PC-9 (cell line): ENCODE measurements at regions of chr16 and their contacts with region 1.

Region 1: GRCh38 chr16:4373863-4374742 is 2.5 kb downstream of the VASN start:
- DNase-seq: peak; percentile 59 to 85
- H3K4me3 ChIP-seq: peak overlapping the region; percentile 61; the same call in 1 of the 2 replicates
- H3K27ac ChIP-seq: peak overlapping the region; percentile 62
- H3K4me1 ChIP-seq: peaks cover 71% of the 10 kb centered on the region
- H3K27me3 ChIP-seq: no peaks in the 10 kb centered on the region
- CTCF ChIP-seq: no peak

Region 2: GRCh38 chr16:2682209-2683021 is 1691.7 kb before region 1 on chr16 and contains the start of gene KCTD5:
- CTCF ChIA-PET with region 1: no interaction called
- POLR2A ChIA-PET with region 1: no interaction called
- intact Hi-C with region 1: no loop called
- DNase-seq: peak; percentile 95 to 100
- H3K4me3 ChIP-seq: peak within 1 kb of the TSS; percentile 81
- H3K27ac ChIP-seq: peak within 1 kb of the TSS; percentile 72
- H3K4me1 ChIP-seq: peaks cover 33% of the 10 kb centered on the region
- H3K27me3 ChIP-seq: no peaks in the 10 kb centered on the region
- CTCF ChIP-seq: no peak
- total RNA-seq, gene KCTD5: 60.4 and 66.5 TPM in 2 replicates

Region 3: GRCh38 chr16:4271176-4272066 is 102.7 kb before region 1 on chr16:
- CTCF ChIA-PET with region 1: no interaction called
- POLR2A ChIA-PET with region 1: no interaction called
- intact Hi-C with region 1: loop called (anchors 5 kb)
- DNase-seq: peak; percentile 82 to 94
- H3K4me3 ChIP-seq: peak overlapping the region; percentile 81
- H3K27ac ChIP-seq: peak overlapping the region; percentile 92
- H3K4me1 ChIP-seq: peaks cover 7% of the 10 kb centered on the region
- H3K27me3 ChIP-seq: no peaks in the 10 kb centered on the region
- CTCF ChIP-seq: no peak

Region 4: DNA sequence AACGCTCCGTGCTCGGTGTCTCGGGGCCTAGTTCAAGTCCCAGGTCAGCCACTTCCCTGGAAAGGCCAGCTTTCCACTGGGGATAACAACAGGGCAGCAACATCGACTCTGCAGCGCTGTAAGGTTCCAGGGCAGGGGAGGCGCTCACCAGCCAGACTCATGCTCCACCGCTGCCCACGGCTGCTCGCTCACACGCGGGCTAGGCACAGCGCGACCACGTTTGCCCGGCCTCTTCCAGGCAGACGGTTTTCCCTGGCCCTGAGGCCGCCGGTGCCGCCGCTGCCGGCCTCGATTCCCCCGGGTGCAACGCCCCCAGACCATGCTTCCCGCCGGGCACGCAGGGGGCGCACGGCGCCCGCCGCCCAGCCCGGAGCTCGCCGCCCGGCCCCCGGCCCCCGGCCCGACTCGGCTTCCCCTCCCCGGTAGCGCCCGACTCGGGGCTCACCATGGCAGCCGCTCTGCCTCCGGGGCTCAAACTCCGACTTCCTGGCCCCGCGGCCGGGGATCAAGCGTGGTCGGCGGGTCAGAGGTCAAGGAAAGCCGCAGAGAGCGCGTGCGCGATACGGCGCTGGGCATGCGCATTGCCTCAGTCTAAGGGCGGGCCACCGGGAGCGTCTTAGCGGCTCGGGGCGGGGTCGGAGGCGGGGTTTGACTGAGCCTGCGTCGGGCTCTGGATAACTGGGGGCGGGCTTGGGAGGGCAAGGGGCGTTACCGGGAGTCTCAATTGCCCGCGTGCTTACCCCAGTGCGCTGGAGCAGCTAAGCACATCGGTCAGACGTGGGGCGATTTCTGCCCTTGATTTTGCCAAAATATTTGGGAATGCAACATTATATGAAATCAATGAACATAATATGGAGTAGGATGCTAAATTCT is 23.1 kb before region 1 on chr16 and contains the start of gene PAM16:
- CTCF ChIA-PET with region 1: interaction called, 13 read pairs
- POLR2A ChIA-PET with region 1: no interaction called
- intact Hi-C with region 1: no loop called
- DNase-seq: peak; percentile 84 to 99
- H3K4me3 ChIP-seq: peak within 1 kb of the TSS; percentile 89
- H3K27ac ChIP-seq: peak within 1 kb of the TSS; percentile 69
- H3K4me1 ChIP-seq: peaks cover 32% of the 10 kb centered on the region
- H3K27me3 ChIP-seq: no peaks in the 10 kb centered on the region
- CTCF ChIP-seq: no peak
- total RNA-seq, gene PAM16: 95.9 and 110 TPM in 2 replicates

Region 5: GRCh38 chr16:4358831-4359561 is 15.1 kb before region 1 on chr16:
- CTCF ChIA-PET with region 1: interaction called, 16 read pairs
- POLR2A ChIA-PET with region 1: no interaction called
- intact Hi-C with region 1: no loop called
- DNase-seq: peak in 1 of 2 experiments; percentile 75
- H3K4me3 ChIP-seq: no peak overlapping the region
- H3K27ac ChIP-seq: no peak overlapping the region
- H3K4me1 ChIP-seq: peaks cover 4% of the 10 kb centered on the region
- H3K27me3 ChIP-seq: no peaks in the 10 kb centered on the region
- CTCF ChIP-seq: peak; percentile 99

Region 6: DNA sequence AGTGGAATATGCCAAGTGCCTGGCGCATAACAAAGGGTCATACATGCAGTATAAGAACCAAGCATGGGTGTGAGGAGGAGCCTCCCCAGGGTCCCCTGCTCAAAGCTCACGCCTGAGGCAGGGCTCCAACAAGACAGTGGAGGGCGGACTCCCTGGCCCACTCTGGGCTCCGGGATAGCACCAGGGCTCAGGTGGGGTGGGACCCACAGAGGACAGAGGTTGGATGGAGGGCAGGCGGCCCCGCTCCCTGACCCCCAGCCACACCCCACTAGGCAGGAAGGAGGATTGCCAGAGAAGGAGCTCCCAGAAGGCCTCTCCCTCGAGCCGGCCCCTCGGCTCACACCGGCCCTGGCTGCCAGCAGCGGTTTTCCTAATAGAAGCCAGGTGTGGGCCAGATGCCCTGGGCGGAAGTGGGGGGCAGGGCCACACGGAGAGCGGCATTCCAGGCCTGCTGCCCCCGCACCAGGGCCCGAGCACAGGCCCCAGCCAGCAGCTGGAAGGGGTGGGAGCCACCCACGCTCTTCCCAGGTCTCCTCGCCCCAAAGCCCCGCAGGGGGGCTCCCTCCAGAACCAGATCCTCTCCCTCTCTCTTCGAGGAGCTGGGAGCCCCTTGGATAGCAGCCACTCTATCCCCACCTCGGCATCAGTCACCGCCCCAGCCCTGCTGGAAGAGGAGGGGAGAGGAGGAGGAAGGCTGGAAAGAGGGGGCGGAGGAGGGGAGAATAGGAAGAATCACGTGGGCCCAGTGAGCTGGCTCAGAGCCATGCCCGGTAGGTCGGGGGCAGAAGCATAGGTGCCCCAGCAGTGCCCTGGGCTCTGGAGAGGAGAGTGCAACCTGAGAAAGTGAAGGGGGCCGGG is 18.5 kb after region 1 on chr16:
- CTCF ChIA-PET with region 1: interaction called, 7 read pairs
- POLR2A ChIA-PET with region 1: interaction called, 22 read pairs
- intact Hi-C with region 1: loop called (anchors 1 kb)
- DNase-seq: peak in 1 of 2 experiments; percentile 90
- H3K4me3 ChIP-seq: no peak overlapping the region
- H3K27ac ChIP-seq: peak overlapping the region; percentile 90
- H3K4me1 ChIP-seq: peaks cover 28% of the 10 kb centered on the region
- H3K27me3 ChIP-seq: no peaks in the 10 kb centered on the region
- CTCF ChIP-seq: no peak

Region 7: DNA sequence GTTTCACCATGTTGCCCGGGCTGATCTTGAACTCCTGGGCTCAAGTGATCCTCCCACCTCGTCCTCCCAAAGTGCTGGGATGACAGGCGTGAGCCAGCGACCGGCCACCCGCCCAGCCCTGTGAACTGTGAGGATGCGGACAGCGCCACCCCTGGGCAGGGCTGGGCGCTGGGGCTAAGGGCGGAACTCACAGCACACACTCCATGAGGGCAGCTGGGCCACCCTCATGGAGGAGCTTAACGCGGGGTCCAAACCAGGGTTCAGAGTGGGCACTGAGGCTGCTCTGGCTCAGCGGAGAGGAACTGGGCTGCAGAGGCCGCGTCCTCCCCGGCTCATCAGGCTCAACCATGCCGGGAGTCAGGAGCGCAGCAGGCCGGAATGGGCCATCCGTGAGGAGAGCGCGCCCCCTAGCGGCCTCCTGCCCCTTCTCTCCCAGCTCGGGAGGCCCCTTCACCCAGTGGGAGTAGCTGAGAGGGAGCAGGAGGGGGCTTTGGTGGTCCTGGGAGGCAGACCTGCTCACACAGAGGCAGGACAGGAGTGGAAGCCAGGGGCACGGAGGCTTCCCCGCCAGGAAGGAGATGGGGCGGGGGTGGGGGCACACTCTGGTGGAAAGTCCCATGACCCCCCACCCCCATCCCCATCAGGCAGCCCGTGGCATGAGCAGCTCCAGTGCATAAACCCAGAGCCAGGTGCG is 28.5 kb after region 1 on chr16:
- CTCF ChIA-PET with region 1: interaction called, 18 read pairs
- POLR2A ChIA-PET with region 1: no interaction called
- intact Hi-C with region 1: no loop called
- DNase-seq: peak in 1 of 2 experiments; percentile 87
- H3K4me3 ChIP-seq: no peak overlapping the region
- H3K27ac ChIP-seq: no peak overlapping the region
- H3K4me1 ChIP-seq: peaks cover 4% of the 10 kb centered on the region; the same call in 1 of the 2 replicates
- H3K27me3 ChIP-seq: no peaks in the 10 kb centered on the region
- CTCF ChIP-seq: peak; percentile 93

Region 8: GRCh38 chr16:4944333-4945281 is 570.5 kb after region 1 on chr16:
- CTCF ChIA-PET with region 1: no interaction called
- POLR2A ChIA-PET with region 1: no interaction called
- intact Hi-C with region 1: loop called (anchors 5 kb)
- DNase-seq: peak; percentile 97 to 100
- H3K4me3 ChIP-seq: 0 out of 2 replicates have a peak overlapping the region, but pooled peaks have one; percentile 23
- H3K27ac ChIP-seq: peak overlapping the region; percentile 96
- H3K4me1 ChIP-seq: peaks cover 78% of the 10 kb centered on the region
- H3K27me3 ChIP-seq: no peaks in the 10 kb centered on the region
- CTCF ChIP-seq: no peak